Panc1 (cell line): ENCODE measurements at regions of chr11 and their contacts with region 1.

Region 1: DNA sequence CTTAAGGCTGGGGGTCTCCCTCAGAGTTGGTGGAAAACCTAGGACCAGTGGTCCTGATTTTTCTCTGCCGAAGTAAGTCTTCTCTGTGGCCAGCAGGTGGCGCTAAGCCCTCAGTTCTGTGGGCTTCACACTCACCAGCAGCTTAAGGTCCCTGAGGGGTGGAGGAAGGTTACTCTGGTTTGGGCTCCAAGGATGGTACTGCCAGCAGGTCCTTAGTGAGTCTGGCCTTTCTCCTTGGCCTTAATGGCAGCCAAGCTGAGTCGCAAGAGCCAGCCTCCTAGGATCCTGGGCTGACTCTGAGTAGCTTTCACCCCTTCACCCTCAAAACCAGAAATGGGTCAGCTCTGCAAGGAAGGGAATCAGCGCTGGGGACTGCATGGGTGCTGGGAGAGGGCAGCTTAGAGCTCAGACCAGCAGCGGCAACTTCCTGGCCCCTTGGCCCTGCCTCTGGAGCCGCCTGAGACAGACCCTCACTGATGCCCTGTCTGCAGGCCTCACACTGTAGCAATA is 4.4 kb downstream of the KCNJ11 start:
- DNase-seq: peak; percentile 56
- ATAC-seq: peak; percentile 74
- H3K4me3 ChIP-seq: no peak overlapping the region
- H3K27ac ChIP-seq: no peak overlapping the region
- H3K4me1 ChIP-seq: no peaks in the 10 kb centered on the region
- H3K27me3 ChIP-seq: no peaks in the 10 kb centered on the region
- CTCF ChIP-seq: peak; percentile 93

Region 2: DNA sequence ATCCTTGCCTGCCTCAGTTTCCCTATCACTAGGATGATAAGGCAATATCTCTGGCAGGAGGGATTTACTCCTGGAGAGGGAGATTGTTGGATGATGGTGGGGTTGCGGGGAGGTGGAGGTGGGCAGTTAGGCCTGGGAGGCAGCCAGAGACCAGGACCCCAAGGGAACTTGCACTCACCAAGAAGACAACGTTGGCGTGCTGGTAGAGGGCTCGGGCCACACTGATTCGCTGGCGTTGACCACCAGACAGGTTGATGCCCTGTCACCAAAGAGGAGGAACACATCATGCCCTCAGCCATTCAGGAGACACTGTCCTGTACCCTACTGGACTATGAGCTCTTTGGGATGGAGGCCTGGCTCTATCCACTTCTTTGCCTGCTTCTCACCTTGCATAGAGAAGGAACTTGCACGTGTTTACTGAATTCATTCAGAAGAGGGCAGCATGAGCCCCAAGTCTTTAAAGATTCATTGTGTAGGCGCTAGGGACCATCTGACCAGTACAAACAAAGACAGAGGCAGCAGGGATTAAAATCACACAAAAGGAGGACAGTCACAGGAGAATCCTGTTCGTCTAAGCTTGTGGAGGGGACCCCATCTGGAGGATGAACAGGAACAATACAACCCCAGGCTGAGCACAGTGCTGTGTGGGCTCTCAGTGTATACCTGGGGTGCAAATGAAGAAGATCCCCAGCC is 28.6 kb after region 1 on chr11:
- CTCF ChIA-PET with region 1: no interaction called
- POLR2A ChIA-PET with region 1: no interaction called
- in situ Hi-C with region 1: no loop called
- intact Hi-C with region 1: no loop called
- DNase-seq: no peak
- ATAC-seq: no peak
- H3K4me3 ChIP-seq: no peak overlapping the region
- H3K27ac ChIP-seq: no peak overlapping the region
- H3K4me1 ChIP-seq: no peaks in the 10 kb centered on the region
- H3K27me3 ChIP-seq: peaks cover 4% of the 10 kb centered on the region; the same call in 1 of the 2 replicates
- CTCF ChIP-seq: no peak

Region 3: GRCh38 chr11:17504330-17505107 is 120.5 kb after region 1 on chr11:
- CTCF ChIA-PET with region 1: interaction called, 5 read pairs
- POLR2A ChIA-PET with region 1: no interaction called
- in situ Hi-C with region 1: no loop called
- intact Hi-C with region 1: loop called (anchors 1 kb)
- DNase-seq: no peak
- ATAC-seq: peak; percentile 91
- H3K4me3 ChIP-seq: no peak overlapping the region
- H3K27ac ChIP-seq: no peak overlapping the region
- H3K4me1 ChIP-seq: no peaks in the 10 kb centered on the region
- H3K27me3 ChIP-seq: no peaks in the 10 kb centered on the region; the same call in 1 of the 2 replicates
- CTCF ChIP-seq: peak; percentile 93

Region 4: DNA sequence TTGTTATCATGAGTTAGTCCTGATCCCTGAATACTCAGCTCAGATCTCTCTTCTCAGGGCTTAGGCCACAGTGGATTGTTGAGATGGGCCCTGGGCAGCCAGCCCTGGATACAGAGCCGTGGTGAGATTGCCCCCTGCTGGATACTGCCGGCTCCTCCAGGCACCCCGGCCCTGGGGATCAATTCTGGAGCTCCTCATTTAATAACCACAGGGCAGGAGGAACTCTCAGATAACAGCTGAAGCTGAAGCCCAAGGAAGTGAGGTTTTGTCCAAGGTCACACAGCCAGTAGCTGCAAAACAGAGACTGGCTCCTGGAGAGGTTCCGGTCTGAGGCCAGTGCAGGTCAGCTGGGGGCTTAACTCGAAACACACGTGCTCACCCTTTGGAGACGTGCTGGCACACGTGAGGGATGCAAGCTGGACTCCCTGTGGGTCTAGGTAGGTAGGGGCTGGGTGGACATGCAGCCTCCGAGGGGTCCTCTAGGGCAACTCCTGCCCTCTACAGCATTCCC is 144.2 kb after region 1 on chr11:
- CTCF ChIA-PET with region 1: interaction called, 16 read pairs
- POLR2A ChIA-PET with region 1: interaction called, 3 read pairs
- in situ Hi-C with region 1: no loop called
- intact Hi-C with region 1: loop called (anchors 2 kb)
- DNase-seq: peak; percentile 5
- ATAC-seq: peak; percentile 90
- H3K4me3 ChIP-seq: no peak overlapping the region
- H3K27ac ChIP-seq: no peak overlapping the region
- H3K4me1 ChIP-seq: no peaks in the 10 kb centered on the region
- H3K27me3 ChIP-seq: no peaks in the 10 kb centered on the region; the same call in 1 of the 2 replicates
- CTCF ChIP-seq: peak; percentile 92